Left cardiac atrium (tissue), 4 donors: ENCODE measurements at regions of chr1 and their contacts with region 1.

Region 1: GRCh38 chr1:224052772-224053171 is 61.1 kb upstream of the FBXO28 start:
- DNase-seq: no peak
- ATAC-seq: no peak

Region 2: GRCh38 chr1:223695941-223696340 is 356.8 kb before region 1 on chr1:
- intact Hi-C with region 1: loop called in 1 of 2 experiments (anchors 5 kb)
- DNase-seq: no peak
- ATAC-seq: no peak

Region 3: GRCh38 chr1:224235813-224236493 is 183.2 kb after region 1 on chr1:
- intact Hi-C with region 1: no loop called
- DNase-seq: no peak
- ATAC-seq: no peak